ENCODE measurements at regions of chr16 and their contacts with region 1.

Region 1: DNA sequence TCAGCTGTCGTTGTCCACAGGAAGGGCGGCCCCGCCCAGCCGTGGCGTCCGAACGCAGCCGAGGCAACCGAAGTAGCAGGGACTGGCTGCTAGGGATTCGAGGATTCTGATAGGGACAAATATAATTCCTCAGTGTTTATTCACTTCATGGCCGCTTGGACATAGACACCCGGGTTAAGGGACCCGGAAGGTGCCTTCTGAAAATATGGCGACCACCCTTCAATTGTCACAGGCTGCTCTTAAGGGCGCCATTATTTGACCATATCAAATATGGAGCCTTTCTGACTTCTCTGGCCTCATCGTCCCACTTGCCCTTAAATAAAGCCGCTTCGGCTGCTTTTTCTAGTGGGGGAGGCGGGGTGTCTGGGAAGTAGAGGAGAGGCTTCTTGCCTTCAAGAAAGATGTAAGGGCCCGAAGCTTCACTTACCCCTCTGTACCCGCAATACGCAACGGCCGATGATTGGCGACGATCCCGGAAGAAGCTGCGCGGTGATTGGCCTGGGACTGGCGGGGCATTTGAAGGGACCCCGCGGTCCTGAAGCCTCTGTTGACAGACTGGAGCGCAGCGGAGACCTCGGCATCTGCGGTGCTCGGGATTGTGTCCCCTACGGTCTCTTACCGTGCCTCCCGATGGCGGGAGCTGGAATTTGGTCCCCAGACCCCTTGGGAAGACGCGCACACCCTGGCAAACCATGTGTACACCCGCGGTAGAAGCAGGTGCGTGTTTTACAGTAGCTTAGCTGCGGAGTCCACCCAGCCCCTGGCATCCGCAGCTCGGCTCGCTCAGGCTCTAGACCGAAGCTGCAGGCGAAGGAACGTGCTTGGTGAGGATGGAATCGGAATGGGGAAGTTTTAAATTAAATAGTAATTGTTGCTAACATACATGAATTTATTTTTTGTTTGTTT is at the start of gene ZNF688:
- DNase-seq: peak; percentile 94 to 97
- ATAC-seq: peak; percentile 88 to 96 (median 94)
- H3K4me3 ChIP-seq: peak within 1 kb of the TSS; percentile 65 to 90 (median 83)
- H3K27ac ChIP-seq: peak within 1 kb of the TSS; percentile 96 to 99 (median 99)
- H3K4me1 ChIP-seq: peaks cover 6 to 50% (median 23%) of the 10 kb centered on the region in 9 donors
- H3K27me3 ChIP-seq: no peaks in the 10 kb centered on the region
- CTCF ChIP-seq: peak in 1 of 9 donors; percentile 8
- total RNA-seq, gene ZNF688: 6.3 to 16.2 (median 12.4) TPM

Region 2: GRCh38 chr16:30445408-30446202 is 126.3 kb before region 1 on chr16 and contains the start of gene SEPHS2:
- intact Hi-C with region 1: loop called in 1 of 10 experiments (anchors 10 kb)
- DNase-seq: peak; percentile 98
- ATAC-seq: peak; percentile 96 to 98 (median 97)
- H3K4me3 ChIP-seq: peak within 1 kb of the TSS; percentile 70 to 98 (median 80)
- H3K27ac ChIP-seq: peak within 1 kb of the TSS; percentile 69 to 100 (median 96)
- H3K4me1 ChIP-seq: peaks cover 2 to 39% (median 18%) of the 10 kb centered on the region in 9 donors
- H3K27me3 ChIP-seq: no peaks in the 10 kb centered on the region
- CTCF ChIP-seq: peak in 8 of 9 donors; percentile 18 to 74 (median 52)
- total RNA-seq, gene SEPHS2: 23.5 to 49.3 (median 29.3) TPM

Region 3: DNA sequence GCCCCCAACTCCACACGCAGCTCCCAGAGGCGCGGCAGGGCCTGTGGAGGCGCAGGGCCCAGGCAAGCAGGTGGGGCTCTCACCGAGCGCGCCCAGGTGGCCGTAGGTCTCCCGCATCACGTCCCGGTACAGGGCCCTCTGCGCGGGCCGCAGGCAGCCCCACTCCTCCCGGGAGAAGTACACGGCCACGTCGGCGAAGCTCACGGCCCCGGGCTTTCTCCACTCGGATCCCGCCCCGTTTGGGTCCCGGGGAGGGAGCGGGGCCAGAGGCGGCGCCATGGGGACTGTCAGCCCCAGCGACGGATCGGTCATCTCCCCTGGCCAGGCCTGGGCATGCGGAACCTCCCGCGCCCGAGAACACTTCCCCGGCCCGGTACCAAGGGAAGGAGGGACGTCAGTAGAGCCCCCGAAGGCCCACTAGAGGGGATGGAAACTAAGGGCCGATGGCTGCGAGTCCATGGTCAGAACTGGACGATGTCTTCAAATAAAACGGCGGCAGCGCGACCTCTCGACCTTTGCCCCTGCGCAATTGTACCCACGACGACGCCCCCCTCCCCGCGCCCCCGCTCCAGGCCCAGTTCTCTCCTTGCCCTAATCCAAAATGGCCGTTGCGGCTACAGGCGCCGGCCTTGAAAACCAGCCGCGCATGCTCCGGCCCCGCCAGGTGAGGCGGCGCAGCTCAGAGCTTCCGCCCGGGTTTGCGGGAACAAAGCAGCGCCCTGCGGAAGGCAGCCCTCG is 37.4 kb before region 1 on chr16 and contains the start of gene ZNF747:
- intact Hi-C with region 1: loop called in 6 of 10 experiments (anchors 5 to 10 kb)
- DNase-seq: peak; percentile 94
- ATAC-seq: peak; percentile 85 to 96 (median 94)
- H3K4me3 ChIP-seq: peak within 1 kb of the TSS; percentile 71 to 94 (median 80)
- H3K27ac ChIP-seq: peak within 1 kb of the TSS; percentile 78 to 98 (median 96)
- H3K4me1 ChIP-seq: peaks cover 0 to 39% (median 30%) of the 10 kb centered on the region in 9 donors
- H3K27me3 ChIP-seq: no peaks in the 10 kb centered on the region
- CTCF ChIP-seq: peak in 2 of 9 donors; percentile 3 to 26
- total RNA-seq, gene ZNF747: 8.5 to 14.3 (median 10.7) TPM

Region 4: GRCh38 chr16:30585400-30586189 is 13.6 kb after region 1 on chr16 and contains the start of gene ZNF785:
- intact Hi-C with region 1: loop called in 3 of 10 experiments (anchors 1 kb)
- DNase-seq: peak; percentile 91 to 99
- ATAC-seq: peak; percentile 98 to 100 (median 99)
- H3K4me3 ChIP-seq: peak within 1 kb of the TSS; percentile 63 to 93 (median 78)
- H3K27ac ChIP-seq: peak within 1 kb of the TSS; percentile 67 to 97 (median 94)
- H3K4me1 ChIP-seq: peaks cover 3 to 26% (median 13%) of the 10 kb centered on the region in 9 donors
- H3K27me3 ChIP-seq: no peaks in the 10 kb centered on the region
- CTCF ChIP-seq: peak in 7 of 9 donors; percentile 19 to 54 (median 42)
- total RNA-seq, gene ZNF785: 2.8 to 8.4 (median 5.4) TPM

Region 5: DNA sequence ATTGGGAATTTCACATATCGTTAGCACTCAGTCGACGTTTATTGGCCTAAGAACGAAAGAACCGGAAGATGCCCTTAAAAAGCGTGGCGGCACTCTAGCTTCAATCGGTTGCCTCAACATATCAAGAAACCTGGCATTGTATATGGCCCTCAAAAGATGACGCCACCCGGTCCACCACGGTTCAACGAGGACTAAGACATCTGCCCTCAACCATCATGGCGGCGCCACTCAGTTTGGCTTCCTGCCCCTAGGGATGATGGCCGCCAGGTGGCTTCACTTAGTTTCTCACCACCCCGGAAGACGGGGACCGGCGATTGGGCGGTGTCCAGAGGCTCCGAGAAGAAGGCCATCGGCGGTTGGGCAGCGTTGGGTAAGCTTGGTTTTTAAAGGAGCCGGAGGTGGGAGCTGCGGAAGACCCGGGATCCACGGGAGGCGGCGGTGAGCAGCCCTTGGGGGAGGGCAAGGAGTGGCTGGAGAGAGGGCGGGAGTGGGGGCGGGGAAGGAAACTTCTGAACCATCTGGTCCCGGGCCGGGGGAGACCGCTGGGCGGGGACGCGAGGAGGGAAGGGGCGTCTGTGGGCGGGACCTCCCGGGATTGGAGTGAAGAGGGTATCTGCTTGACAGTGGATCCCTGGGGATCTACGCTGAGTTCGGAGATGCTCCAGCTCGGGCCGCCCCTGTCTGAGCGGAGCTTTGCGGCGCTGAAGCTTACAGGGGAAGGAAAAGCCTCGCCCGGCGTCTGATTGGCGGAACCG is 78.6 kb after region 1 on chr16 and contains the start of gene PRR14:
- intact Hi-C with region 1: loop called in 1 of 10 experiments (anchors 5 kb)
- DNase-seq: peak; percentile 99 to 100
- ATAC-seq: peak; percentile 91 to 96 (median 94)
- H3K4me3 ChIP-seq: peak within 1 kb of the TSS; percentile 73 to 97 (median 88)
- H3K27ac ChIP-seq: peak within 1 kb of the TSS; percentile 89 to 98 (median 96)
- H3K4me1 ChIP-seq: peaks cover 3 to 23% (median 19%) of the 10 kb centered on the region in 9 donors
- H3K27me3 ChIP-seq: no peaks in the 10 kb centered on the region
- CTCF ChIP-seq: peak in 7 of 9 donors; percentile 8 to 51 (median 42)
- total RNA-seq, gene PRR14: 9.9 to 23.9 (median 16.7) TPM